GM10248 (cell line): ENCODE measurements at regions of chr5 and their contacts with region 1.

Region 1: GRCh38 chr5:111158105-111158744 is 66.0 kb upstream of the CAMK4 start:
- DNase-seq: peak; percentile 55
- CTCF ChIP-seq: peak; percentile 97

Region 2: DNA sequence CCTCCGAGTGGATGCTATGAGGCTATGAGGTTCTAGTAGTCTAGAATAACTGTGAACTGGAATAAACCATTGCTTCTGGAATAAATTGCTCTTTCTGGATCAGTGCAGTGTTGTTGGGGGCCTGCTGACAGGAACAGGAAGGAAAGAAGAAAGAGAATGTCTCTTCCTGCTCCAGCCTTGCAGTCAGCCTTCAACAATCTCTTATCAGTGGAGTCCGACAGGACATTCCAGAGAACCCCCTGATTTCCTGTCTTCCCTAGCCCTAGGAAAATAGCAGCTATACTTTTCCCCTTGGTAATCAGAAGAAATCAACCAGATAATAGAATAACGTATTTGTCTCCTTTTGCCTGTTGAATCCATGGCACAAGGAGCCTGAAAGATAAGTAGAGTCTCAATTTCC is 10.7 kb before region 1 on chr5:
- CTCF ChIA-PET with region 1: interaction called, 28 read pairs
- POLR2A ChIA-PET with region 1: no interaction called
- DNase-seq: no peak
- CTCF ChIP-seq: no peak

Region 3: DNA sequence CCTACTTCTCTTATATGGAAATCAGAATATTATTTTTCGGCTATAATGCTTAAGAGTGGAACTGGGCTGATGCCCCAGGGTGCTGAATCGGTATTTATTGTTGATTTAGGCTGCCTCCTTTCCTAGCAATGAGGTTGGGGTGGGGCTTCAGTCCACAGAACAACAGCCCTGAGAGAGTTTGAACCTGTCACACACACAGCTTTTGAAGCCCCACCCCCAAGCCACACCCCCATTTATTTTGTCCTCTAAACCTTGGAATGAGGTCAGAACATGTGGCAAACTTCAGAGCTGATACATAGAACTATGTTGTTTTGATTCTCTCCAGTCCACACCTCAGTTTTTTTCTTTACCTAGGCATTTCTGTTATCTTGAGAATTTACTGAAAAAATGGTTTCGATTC is 14.3 kb after region 1 on chr5:
- CTCF ChIA-PET with region 1: interaction called, 25 read pairs
- POLR2A ChIA-PET with region 1: no interaction called
- DNase-seq: no peak
- CTCF ChIP-seq: no peak

Region 4: DNA sequence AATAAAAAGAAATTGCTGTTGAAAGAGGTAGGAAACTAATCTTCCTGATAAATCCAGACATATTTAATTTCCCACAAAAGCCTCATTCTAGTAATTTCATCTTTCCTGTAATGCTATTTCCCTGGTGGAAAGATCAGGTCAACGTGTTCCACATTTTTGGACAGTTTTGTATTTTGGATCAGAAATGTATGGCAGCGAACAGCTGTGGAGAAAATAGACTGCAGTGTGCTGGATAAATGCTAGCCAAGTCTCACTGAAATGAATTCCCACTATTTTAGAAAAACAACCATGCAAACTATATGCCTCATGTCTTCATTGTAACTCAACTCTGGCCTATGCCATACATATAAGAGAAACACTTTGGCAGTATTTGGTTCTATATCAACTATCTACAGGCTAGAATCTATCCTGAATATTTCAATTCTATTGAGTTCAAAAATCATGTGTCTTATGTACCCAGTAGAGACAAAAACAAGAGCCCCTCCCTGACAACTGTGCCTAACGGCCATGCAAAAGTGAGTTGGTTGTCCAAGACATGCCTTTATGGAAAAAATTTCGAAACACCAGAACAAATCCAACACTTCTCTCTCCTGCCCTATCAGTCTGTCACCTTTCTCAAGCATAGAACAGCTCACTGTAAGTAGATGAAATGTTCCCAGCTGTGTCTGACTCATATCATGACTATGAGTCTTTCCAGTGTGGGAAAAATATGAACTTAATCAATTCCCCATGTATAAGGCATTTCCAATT is 790.0 kb after region 1 on chr5:
- CTCF ChIA-PET with region 1: no interaction called
- POLR2A ChIA-PET with region 1: no interaction called
- DNase-seq: no peak
- CTCF ChIP-seq: no peak